ENCODE measurements at regions of chr10 and their contacts with region 1.

Region 1: DNA sequence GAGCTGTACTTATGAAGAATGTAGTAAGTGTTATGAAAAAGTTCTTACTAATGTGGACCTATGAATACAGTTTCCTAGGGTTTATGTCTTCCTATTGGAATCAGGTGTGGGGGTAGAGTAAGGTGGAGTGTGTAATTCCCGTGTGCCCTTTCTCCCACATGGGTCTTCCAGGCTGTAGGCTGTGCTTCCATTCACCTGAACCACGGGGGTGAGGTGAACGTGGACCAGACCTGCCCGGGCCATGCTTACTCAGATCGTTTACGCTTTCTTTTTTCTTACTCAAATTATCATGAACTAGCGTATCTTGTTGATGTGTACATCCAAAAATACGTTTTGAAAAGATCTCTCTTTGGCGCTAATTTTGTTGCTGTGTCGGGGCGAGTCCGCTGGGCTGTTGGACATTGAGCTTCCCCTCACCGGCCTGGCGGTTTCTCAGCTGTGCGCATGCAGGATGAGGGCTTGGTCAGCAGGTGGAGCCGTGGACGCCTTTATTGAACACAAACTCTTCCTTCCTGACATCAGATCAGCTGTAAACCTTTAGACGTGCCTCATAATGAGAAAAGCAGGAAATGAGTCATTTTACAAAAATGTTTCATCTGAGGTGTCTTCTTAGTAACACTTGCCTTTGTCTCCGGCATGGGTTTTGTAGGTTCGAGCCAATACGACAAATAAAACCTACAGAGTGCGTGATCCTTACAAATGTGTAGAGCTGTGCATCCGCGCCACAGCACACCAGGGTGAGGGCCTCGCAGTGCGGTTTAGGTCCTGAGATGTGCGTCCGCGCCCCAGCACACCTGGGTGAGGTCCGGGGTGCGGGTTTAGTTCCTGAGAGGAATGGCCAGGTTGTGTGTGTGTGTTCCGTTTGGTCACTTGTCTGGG is 53.8 kb downstream of the WDR37 start:
- DNase-seq: peak; percentile 38 to 83 (median 76)
- ATAC-seq: peak; percentile 96
- H3K4me3 ChIP-seq: peak overlapping the region; percentile 28
- H3K4me3 Mint-ChIP-seq: peak overlapping the region; percentile 24 to 73 (median 54)
- H3K27ac ChIP-seq: peak overlapping the region; percentile 66
- H3K27ac Mint-ChIP-seq: peak overlapping the region; percentile 83 to 97 (median 91)
- H3K4me1 ChIP-seq: peaks cover 7 to 13% of the 10 kb centered on the region in 2 donors
- H3K4me1 Mint-ChIP-seq: peaks cover 32 to 48% (median 36%) of the 10 kb centered on the region in 7 donors
- H3K27me3 ChIP-seq: no peaks in the 10 kb centered on the region
- H3K27me3 Mint-ChIP-seq: no peaks in the 10 kb centered on the region

Region 2: DNA sequence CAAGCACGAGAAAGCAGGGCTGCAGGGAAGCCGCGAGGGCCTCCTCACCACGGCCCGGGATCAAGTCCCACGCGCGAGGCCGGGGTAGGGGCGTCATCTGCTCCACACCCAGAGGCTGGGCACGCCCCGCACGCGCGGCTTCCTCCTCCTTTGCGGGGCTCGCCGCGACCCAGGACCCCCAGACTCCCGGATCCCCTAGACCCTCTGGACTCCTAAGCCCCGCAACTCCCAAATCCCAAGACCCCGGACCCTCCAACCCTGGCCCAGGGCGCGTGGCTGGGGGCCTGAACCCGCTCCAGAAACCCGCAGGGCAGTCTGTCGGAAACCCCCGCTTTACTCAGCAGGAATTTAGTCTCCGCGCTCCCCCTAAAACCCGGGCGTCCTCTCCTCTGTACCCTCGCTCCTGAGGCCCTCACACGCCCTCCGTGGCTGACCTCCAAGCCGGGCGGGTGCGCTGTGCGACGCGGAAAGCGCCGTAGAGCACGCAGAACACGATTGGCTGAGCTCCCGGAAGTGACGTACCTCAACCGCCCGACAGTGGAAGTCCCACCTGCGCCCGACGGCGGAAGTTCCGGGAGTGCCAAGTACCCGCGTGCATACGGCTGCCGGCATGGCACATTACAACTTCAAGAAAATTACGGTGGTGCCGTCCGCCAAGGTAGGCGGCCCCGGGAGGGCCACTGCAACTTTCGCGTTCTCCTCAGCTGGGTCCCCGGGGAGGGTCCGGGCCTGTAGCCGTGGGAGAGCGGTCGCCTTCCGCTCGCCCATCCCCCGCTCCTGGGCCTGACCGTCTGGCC is 122.0 kb before region 1 on chr10 and contains the start of gene GTPBP4:
- CTCF ChIA-PET with region 1: no interaction called
- POLR2A ChIA-PET with region 1: no interaction called
- intact Hi-C with region 1: loop called in 1 of 2 experiments (anchors 5 kb)
- DNase-seq: peak; percentile 88 to 98 (median 95)
- ATAC-seq: peak; percentile 99
- H3K4me3 ChIP-seq: peak within 1 kb of the TSS; percentile 90
- H3K4me3 Mint-ChIP-seq: peak within 1 kb of the TSS; percentile 95 to 98 (median 96)
- H3K27ac ChIP-seq: peak within 1 kb of the TSS; percentile 95
- H3K27ac Mint-ChIP-seq: peak within 1 kb of the TSS; percentile 88 to 99 (median 97)
- H3K4me1 ChIP-seq: peaks cover 18 to 19% of the 10 kb centered on the region in 2 donors
- H3K4me1 Mint-ChIP-seq: peaks cover 21 to 45% (median 40%) of the 10 kb centered on the region in 7 donors
- H3K27me3 ChIP-seq: no peaks in the 10 kb centered on the region
- H3K27me3 Mint-ChIP-seq: no peaks in the 10 kb centered on the region
- total RNA-seq, gene GTPBP4: 39.0 to 81.8 (median 45.2) TPM

Region 3: GRCh38 chr10:1323951-1324350 is 213.9 kb after region 1 on chr10:
- CTCF ChIA-PET with region 1: no interaction called
- POLR2A ChIA-PET with region 1: no interaction called
- intact Hi-C with region 1: loop called in 1 of 2 experiments (anchors 1 kb)
- DNase-seq: no peak
- ATAC-seq: no peak
- H3K4me3 ChIP-seq: no peak overlapping the region
- H3K4me3 Mint-ChIP-seq: no peak overlapping the region
- H3K27ac ChIP-seq: no peak overlapping the region
- H3K27ac Mint-ChIP-seq: no peak overlapping the region
- H3K4me1 ChIP-seq: no peaks in the 10 kb centered on the region
- H3K4me1 Mint-ChIP-seq: peaks cover 0 to 14% (median 8%) of the 10 kb centered on the region in 7 donors
- H3K27me3 ChIP-seq: no peaks in the 10 kb centered on the region
- H3K27me3 Mint-ChIP-seq: peaks cover 9 to 23% (median 22%) of the 10 kb centered on the region in 5 donors

Region 4: GRCh38 chr10:1368842-1369171 is 258.8 kb after region 1 on chr10:
- CTCF ChIA-PET with region 1: interaction called, 4 read pairs
- POLR2A ChIA-PET with region 1: no interaction called
- intact Hi-C with region 1: loop called (anchors 1 to 5 kb)
- DNase-seq: peak in 3 of 9 donors; percentile 5 to 21 (median 9)
- ATAC-seq: peak; percentile 36
- H3K4me3 ChIP-seq: no peak overlapping the region
- H3K4me3 Mint-ChIP-seq: no peak overlapping the region
- H3K27ac ChIP-seq: no peak overlapping the region
- H3K27ac Mint-ChIP-seq: no peak overlapping the region
- H3K4me1 ChIP-seq: no peaks in the 10 kb centered on the region
- H3K4me1 Mint-ChIP-seq: no peaks in the 10 kb centered on the region
- H3K27me3 ChIP-seq: no peaks in the 10 kb centered on the region
- H3K27me3 Mint-ChIP-seq: peaks cover 17 to 35% (median 32%) of the 10 kb centered on the region in 5 donors

Region 5: DNA sequence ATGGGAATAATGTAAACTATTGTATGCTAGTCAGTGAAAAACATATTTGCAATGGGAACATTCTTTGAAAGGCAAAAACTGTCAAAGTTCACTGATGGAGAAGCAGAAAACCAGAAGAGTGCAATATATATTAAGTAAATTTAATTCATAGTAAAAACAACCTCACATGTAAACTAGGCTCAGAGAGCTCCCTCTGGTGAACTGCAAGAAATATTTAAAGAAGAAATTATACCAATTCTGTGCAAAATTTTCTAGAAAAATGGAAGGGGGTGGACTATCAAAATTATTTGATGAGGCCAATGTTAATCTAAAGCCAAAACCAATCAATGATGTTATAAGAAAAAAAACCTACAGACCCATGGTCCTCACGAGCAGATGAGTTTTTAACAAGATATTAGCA is 277.4 kb after region 1 on chr10:
- CTCF ChIA-PET with region 1: interaction called, 5 read pairs
- POLR2A ChIA-PET with region 1: no interaction called
- intact Hi-C with region 1: loop called (anchors 1 to 5 kb)
- DNase-seq: no peak
- ATAC-seq: no peak
- H3K4me3 ChIP-seq: no peak overlapping the region
- H3K4me3 Mint-ChIP-seq: no peak overlapping the region
- H3K27ac ChIP-seq: no peak overlapping the region
- H3K27ac Mint-ChIP-seq: no peak overlapping the region
- H3K4me1 ChIP-seq: no peaks in the 10 kb centered on the region
- H3K4me1 Mint-ChIP-seq: no peaks in the 10 kb centered on the region
- H3K27me3 ChIP-seq: no peaks in the 10 kb centered on the region
- H3K27me3 Mint-ChIP-seq: peaks cover 20 to 34% (median 28%) of the 10 kb centered on the region in 5 donors

Region 6: DNA sequence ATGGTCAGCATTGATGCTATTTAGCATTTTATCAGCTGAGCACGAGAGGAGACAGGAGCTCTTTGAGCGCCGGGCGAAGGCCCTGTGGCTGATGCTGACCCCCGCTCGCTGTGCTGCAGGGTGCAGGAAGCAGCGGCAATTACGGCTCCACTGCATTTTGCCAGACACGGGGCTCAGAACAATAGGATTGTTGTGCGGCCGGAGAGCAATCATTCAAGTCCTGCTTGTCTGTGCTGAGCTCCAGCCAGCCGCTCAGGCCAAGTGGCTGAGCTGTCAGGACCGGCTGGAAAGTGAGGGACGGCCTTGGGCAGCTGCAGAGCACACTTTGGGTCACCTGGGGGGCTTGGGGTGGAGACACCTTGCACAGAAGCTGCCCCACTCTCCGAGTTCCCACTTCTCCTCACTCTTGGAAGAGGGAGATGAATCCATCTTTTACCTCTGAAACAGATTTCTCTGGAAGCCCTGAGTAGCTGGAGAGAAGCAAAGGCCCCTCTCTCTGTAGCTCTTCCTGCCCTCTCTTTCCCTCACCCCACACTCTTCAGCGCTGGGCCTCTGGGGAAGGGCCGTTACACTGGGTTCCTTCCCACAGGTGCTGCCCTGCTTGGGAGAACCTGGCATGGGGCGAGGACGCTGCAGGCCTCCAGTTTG is 644.6 kb after region 1 on chr10:
- CTCF ChIA-PET with region 1: no interaction called
- POLR2A ChIA-PET with region 1: no interaction called
- intact Hi-C with region 1: loop called in 1 of 2 experiments (anchors 10 kb)
- DNase-seq: no peak
- ATAC-seq: no peak
- H3K4me3 ChIP-seq: no peak overlapping the region
- H3K4me3 Mint-ChIP-seq: no peak overlapping the region
- H3K27ac ChIP-seq: no peak overlapping the region
- H3K27ac Mint-ChIP-seq: no peak overlapping the region
- H3K4me1 ChIP-seq: peaks cover 0 to 4% of the 10 kb centered on the region in 2 donors
- H3K4me1 Mint-ChIP-seq: peaks cover 0 to 4% (median 0%) of the 10 kb centered on the region in 7 donors
- H3K27me3 ChIP-seq: no peaks in the 10 kb centered on the region
- H3K27me3 Mint-ChIP-seq: peaks cover 0 to 29% (median 10%) of the 10 kb centered on the region in 5 donors

Region 7: DNA sequence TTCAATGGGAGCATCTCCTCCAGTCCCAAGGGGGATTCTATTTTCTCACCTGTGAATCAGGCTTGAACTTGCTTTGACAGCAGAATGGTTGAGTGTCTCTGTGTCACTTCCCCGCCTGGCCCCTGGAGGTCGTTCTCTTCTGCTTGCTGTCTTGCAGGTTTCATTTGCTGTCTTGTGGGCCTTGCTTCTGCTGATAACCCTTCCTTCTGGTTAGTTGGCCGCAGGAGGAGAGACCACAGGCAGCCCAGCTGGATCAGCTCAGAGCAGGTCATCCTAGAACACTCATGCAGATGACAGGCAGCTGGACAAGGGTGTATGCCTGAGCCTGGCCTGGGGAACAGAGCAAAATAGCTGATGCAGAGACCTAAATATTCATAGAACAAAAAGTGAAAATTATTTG is 971.5 kb after region 1 on chr10:
- CTCF ChIA-PET with region 1: no interaction called
- POLR2A ChIA-PET with region 1: no interaction called
- intact Hi-C with region 1: loop called in 1 of 2 experiments (anchors 5 kb)
- DNase-seq: no peak
- ATAC-seq: no peak
- H3K4me3 ChIP-seq: no peak overlapping the region
- H3K4me3 Mint-ChIP-seq: no peak overlapping the region
- H3K27ac ChIP-seq: no peak overlapping the region
- H3K27ac Mint-ChIP-seq: no peak overlapping the region
- H3K4me1 ChIP-seq: no peaks in the 10 kb centered on the region
- H3K4me1 Mint-ChIP-seq: no peaks in the 10 kb centered on the region
- H3K27me3 ChIP-seq: no peaks in the 10 kb centered on the region
- H3K27me3 Mint-ChIP-seq: peaks cover 0 to 13% (median 5%) of the 10 kb centered on the region in 5 donors

Measured in naive thymus-derived CD4-positive, alpha-beta T cell (primary cell).